ENCODE measurements at regions of chr1 and their contacts with region 1.

Region 1: DNA sequence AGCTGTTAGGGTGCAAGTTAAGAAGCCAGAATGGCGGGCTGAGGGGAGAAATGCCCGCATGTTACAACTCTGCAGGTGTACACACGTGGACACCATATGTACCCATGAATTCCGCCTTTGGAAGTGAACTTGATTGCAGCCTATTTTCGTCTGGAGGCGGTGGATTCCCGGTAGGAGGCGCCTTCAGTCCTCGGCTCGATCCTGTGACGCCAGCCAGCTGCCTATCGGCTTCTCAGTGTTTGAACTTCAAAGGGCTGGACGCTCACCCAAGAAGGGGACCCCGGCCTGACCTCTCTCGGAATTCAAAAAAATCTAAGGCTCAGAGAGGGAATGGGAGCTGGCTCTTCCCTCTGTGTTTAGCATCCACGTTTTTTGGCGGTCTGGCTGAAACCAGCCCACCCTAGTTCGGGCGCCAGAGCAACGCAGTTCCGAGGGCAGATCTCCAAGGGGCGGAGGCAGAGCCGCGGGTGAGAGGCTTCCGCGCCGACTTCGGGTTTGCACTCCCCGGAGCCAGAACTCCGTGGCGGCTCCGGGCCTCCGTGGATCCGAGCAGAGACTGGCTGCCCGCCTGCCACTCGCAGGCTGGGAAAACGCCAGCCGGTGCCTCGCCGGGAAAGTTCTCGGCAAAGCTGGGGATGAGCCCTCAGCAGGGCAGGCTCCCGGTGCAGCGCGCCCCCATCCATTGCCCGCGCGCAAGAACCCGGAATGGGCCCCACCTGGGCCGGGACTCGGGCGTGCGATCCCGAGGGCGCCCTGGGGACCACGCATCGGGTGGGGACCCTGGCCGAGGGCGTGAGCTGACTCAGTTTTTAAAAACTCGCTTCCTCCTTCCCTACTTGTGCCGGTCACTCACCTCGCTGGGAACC is 996 bp upstream of the TMEM51 start:
- DNase-seq: no peak
- ATAC-seq: no peak
- H3K4me3 ChIP-seq: peak overlapping the region; percentile 67
- H3K27ac ChIP-seq: no peak overlapping the region
- H3K4me1 ChIP-seq: peaks cover 25% of the 10 kb centered on the region
- H3K27me3 ChIP-seq: peaks cover 10 to 16% of the 10 kb centered on the region in 2 experiments; a peak in 3 of 4 replicates
- CTCF ChIP-seq: peak; percentile 26 to 72 (median 30); a peak in 4 of 6 replicates
- EP300 ChIP-seq: no peak
- POLR2A ChIP-seq: no peak
- RAD21 ChIP-seq: peak; percentile 61

Region 2: GRCh38 chr1:15168479-15168878 is 15.9 kb after region 1 on chr1:
- CTCF ChIA-PET with region 1: interaction called, 13 read pairs
- POLR2A ChIA-PET with region 1: interaction called, 10 read pairs
- RAD21 ChIA-PET with region 1: interaction called, 23 read pairs
- SMC1A ChIA-PET with region 1: interaction called, 18 read pairs
- in situ Hi-C with region 1: no loop called
- intact Hi-C with region 1: no loop called
- DNase-seq: peak; percentile 63
- ATAC-seq: peak; percentile 82
- H3K4me3 ChIP-seq: no peak overlapping the region
- H3K27ac ChIP-seq: peak overlapping the region; percentile 47
- H3K4me1 ChIP-seq: peaks cover 13% of the 10 kb centered on the region
- H3K27me3 ChIP-seq: no peaks in the 10 kb centered on the region
- CTCF ChIP-seq: no peak
- EP300 ChIP-seq: no peak
- POLR2A ChIP-seq: no peak
- RAD21 ChIP-seq: no peak

Region 3: DNA sequence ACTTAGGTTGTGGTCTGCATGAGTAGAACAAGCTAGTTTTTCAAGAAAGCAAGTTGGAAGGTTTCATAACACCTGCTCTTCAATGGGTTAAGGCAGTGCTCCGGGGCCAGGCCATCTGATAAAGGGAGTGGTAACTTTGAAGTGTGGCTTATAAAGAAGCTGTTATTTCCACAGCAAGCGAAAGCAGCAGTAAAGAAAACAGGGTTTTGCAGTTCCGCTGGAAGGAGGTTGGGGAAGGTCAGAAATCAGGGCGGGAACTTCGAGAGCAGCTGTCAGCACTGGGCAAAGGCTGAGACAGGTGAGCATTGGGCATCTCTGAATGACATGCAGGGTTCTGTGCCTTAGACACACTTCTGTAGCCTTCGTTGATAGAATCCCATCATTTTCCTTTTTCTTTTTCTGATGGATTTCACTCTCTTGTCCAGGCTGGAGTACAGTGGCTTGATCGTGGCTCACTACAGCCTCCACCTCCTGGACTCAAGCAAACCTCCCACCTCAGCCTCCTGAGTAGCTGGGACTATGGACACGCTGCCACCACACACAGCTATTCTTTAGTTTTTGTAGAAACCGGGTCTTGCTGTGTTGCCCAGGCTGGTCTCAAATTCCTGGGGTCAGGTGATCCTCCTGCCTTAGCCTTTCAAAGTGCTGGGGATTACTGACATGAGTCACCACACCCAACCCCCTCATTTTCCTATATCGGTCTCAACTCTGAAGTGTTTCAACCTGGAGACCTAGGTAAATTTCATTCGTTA is 21.5 kb after region 1 on chr1:
- CTCF ChIA-PET with region 1: interaction called, 13 read pairs
- POLR2A ChIA-PET with region 1: interaction called, 12 read pairs
- RAD21 ChIA-PET with region 1: interaction called, 23 read pairs
- SMC1A ChIA-PET with region 1: interaction called, 18 read pairs
- in situ Hi-C with region 1: no loop called
- intact Hi-C with region 1: no loop called
- DNase-seq: no peak
- ATAC-seq: no peak
- H3K4me3 ChIP-seq: no peak overlapping the region
- H3K27ac ChIP-seq: no peak overlapping the region
- H3K4me1 ChIP-seq: peaks cover 47% of the 10 kb centered on the region
- H3K27me3 ChIP-seq: no peaks in the 10 kb centered on the region
- CTCF ChIP-seq: no peak
- EP300 ChIP-seq: no peak
- POLR2A ChIP-seq: no peak
- RAD21 ChIP-seq: no peak

Region 4: GRCh38 chr1:15231714-15232201 is 79.2 kb after region 1 on chr1:
- CTCF ChIA-PET with region 1: interaction called, 8 read pairs
- POLR2A ChIA-PET with region 1: interaction called, 4 read pairs
- RAD21 ChIA-PET with region 1: interaction called, 21 read pairs
- SMC1A ChIA-PET with region 1: interaction called, 14 read pairs
- in situ Hi-C with region 1: no loop called
- intact Hi-C with region 1: no loop called
- DNase-seq: peak; percentile 95
- ATAC-seq: peak; percentile 100
- H3K4me3 ChIP-seq: no peak overlapping the region
- H3K27ac ChIP-seq: peak overlapping the region; percentile 41; the same call in 1 of the 2 replicates
- H3K4me1 ChIP-seq: peaks cover 12% of the 10 kb centered on the region
- H3K27me3 ChIP-seq: no peaks in the 10 kb centered on the region
- CTCF ChIP-seq: no peak
- EP300 ChIP-seq: peak; percentile 20 to 62; a peak in 2 of 4 replicates
- POLR2A ChIP-seq: no peak
- RAD21 ChIP-seq: no peak

Region 5: GRCh38 chr1:15246960-15247614 is 94.5 kb after region 1 on chr1 and contains the start of gene FHAD1:
- CTCF ChIA-PET with region 1: interaction called, 10 read pairs
- POLR2A ChIA-PET with region 1: interaction called, 4 read pairs
- RAD21 ChIA-PET with region 1: interaction called, 19 read pairs
- SMC1A ChIA-PET with region 1: interaction called, 20 read pairs
- in situ Hi-C with region 1: no loop called
- intact Hi-C with region 1: loop called (anchors 5 kb)
- DNase-seq: no peak
- ATAC-seq: peak; percentile 73
- H3K4me3 ChIP-seq: peak within 1 kb of the TSS; percentile 28; the same call in 1 of the 2 replicates
- H3K27ac ChIP-seq: no peak within 1 kb of the TSS
- H3K4me1 ChIP-seq: peaks cover 20% of the 10 kb centered on the region
- H3K27me3 ChIP-seq: no peaks in the 10 kb centered on the region
- CTCF ChIP-seq: no peak
- EP300 ChIP-seq: no peak
- POLR2A ChIP-seq: no peak
- RAD21 ChIP-seq: no peak
- polyA plus RNA-seq, gene FHAD1: 0.09 TPM in 1 of 2 experiments, not detected in the other

Region 6: GRCh38 chr1:15251857-15252835 is 99.6 kb after region 1 on chr1:
- CTCF ChIA-PET with region 1: interaction called, 10 read pairs
- POLR2A ChIA-PET with region 1: interaction called, 8 read pairs
- RAD21 ChIA-PET with region 1: interaction called, 19 read pairs
- SMC1A ChIA-PET with region 1: interaction called, 20 read pairs
- in situ Hi-C with region 1: no loop called
- intact Hi-C with region 1: loop called (anchors 5 kb)
- DNase-seq: no peak
- ATAC-seq: peak; percentile 38
- H3K4me3 ChIP-seq: no peak overlapping the region
- H3K27ac ChIP-seq: peak overlapping the region; percentile 48
- H3K4me1 ChIP-seq: peaks cover 27% of the 10 kb centered on the region
- H3K27me3 ChIP-seq: no peaks in the 10 kb centered on the region
- CTCF ChIP-seq: no peak
- EP300 ChIP-seq: no peak
- POLR2A ChIP-seq: no peak
- RAD21 ChIP-seq: no peak

Region 7: DNA sequence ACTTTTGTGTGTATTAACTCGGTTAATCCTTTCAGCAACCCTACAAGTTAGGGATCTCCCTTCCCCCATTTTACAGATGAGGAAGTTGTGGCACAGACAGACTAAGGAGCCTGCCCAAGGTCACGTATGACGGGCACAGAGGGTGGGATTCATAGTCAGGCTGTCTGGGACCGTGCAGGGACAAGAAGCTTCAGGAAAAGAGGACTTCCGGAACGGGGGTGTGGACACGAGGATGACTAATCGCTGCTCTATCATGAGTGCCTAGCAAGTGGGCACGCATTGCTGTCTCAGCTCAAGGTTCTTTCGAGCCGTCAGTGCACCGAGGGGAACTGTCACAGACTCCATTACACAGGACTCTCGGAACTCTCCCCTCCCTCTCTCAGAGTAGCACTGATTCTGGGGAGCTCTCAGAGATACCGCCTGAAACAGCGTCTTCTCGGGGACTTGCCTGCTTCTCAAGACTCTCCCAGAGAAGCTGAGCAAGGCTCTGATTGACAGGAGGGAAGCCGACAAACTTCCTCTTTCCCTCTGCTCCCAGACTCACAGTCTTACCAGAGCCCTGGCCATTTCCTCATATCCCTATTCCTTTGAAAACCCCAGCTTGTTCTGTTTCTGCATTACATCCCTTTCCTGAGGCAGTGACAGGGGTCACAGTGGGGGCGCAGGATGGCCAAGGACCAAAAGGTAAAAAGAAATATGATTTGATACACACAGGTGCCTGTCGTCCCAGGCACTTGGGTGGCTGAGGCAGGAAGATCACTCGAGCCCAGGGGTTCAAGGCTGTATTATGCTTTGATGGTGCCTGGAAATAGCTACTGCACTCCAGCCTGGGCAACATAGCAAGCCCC is 108.8 kb after region 1 on chr1:
- CTCF ChIA-PET with region 1: interaction called, 7 read pairs
- POLR2A ChIA-PET with region 1: interaction called, 4 read pairs
- RAD21 ChIA-PET with region 1: interaction called, 5 read pairs
- SMC1A ChIA-PET with region 1: interaction called, 17 read pairs
- in situ Hi-C with region 1: no loop called
- intact Hi-C with region 1: no loop called
- DNase-seq: no peak
- ATAC-seq: peak; percentile 78
- H3K4me3 ChIP-seq: peak overlapping the region; percentile 25; the same call in 1 of the 2 replicates
- H3K27ac ChIP-seq: peak overlapping the region; percentile 63
- H3K4me1 ChIP-seq: peaks cover 21% of the 10 kb centered on the region
- H3K27me3 ChIP-seq: no peaks in the 10 kb centered on the region
- CTCF ChIP-seq: no peak
- EP300 ChIP-seq: 0 out of 4 replicates have a peak, but pooled peaks of 1 of the 2 experiments have one; percentile 3
- POLR2A ChIP-seq: no peak
- RAD21 ChIP-seq: no peak

Region 8: DNA sequence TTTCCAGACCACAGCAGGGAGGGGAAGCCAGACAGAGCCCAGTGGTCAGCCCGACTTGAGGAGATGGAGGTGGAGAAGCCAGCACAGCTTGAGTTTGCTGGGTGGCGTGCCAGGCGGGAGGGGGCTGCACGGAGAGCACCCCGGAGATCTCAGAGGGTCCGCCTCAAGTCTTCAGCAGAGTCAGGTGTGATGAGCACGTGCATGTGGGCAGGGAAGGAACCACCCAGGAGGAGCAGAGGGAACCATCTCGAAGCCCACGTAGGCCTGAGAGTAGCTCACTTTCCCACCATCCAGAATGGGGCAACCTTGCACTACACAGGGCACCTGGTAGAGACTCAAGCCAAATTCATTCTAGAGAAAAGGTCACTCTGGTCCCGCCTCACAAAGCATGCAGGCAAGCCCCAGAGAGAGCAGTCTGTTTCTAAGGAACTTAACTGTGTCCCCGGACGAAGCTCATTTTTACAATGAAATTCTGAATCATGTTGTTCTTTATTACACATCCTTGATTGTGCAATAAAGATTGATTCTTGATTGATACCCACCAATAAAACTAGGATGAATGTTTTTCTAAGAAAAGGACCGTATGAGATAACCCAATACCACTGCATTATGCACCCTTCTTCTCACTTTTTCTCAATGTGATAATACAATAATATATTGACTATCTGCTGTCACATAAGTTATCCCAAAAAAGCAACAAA is 158.7 kb after region 1 on chr1:
- CTCF ChIA-PET with region 1: no interaction called
- POLR2A ChIA-PET with region 1: no interaction called
- RAD21 ChIA-PET with region 1: no interaction called
- SMC1A ChIA-PET with region 1: no interaction called
- in situ Hi-C with region 1: no loop called
- intact Hi-C with region 1: no loop called
- DNase-seq: no peak
- ATAC-seq: no peak
- H3K4me3 ChIP-seq: no peak overlapping the region
- H3K27ac ChIP-seq: no peak overlapping the region
- H3K4me1 ChIP-seq: no peaks in the 10 kb centered on the region
- H3K27me3 ChIP-seq: peaks cover 0 to 2% of the 10 kb centered on the region in 2 experiments; a peak in 3 of 4 replicates
- CTCF ChIP-seq: no peak
- EP300 ChIP-seq: no peak
- POLR2A ChIP-seq: no peak
- RAD21 ChIP-seq: no peak

Measured in GM12878 (cell line).